ENCODE measurements at regions of chr6 and their contacts with region 1.

Region 1: GRCh38 chr6:34154668-34155447 is 9.0 kb upstream of the GRM4 start:
- DNase-seq: peak; percentile 74
- H3K4me3 ChIP-seq: peak overlapping the region; percentile 31
- H3K27ac ChIP-seq: no peak overlapping the region
- H3K4me1 ChIP-seq: peaks cover 10% of the 10 kb centered on the region
- CTCF ChIP-seq: peak; percentile 93

Region 2: DNA sequence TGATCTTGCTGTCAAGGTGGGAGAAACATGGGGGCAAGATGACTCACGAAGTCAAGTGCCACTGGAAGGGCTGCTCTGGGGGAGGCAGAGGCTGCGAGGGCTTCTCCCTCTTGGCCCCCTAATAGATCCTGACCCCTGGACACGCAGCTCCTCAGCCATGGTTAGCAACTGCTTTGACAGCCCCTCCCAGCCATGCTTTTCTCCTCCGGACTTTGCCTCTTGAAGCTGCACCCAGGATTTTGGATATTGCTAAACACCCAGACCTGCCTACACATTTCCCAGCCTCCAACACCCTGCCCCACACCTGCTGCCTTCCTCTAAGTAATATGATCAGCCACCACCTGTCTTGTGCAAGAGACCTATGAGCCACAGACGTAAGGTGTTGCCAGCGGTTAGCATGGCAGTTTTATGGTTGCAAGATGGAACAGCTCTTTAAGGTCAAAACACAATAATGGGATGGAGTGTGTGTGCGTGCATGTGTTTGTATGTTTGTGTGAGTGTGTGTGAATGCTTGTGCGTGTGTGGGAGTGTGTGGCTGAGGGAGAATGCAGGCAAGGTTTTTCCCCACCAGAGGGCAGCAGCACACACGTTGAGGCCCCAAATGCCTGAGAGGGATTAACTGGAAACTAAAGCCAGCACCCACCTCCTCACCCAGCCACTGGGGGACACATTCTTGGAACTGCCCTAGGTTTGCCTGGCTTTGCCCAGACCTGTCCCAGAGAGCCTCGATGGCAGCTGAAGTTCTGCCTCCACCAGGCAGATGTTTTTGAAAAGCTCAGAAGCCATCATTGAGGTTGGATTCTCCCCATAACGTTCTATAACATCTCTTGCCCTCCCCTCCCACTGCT is 410.6 kb before region 1 on chr6:
- CTCF ChIA-PET with region 1: no interaction called
- POLR2A ChIA-PET with region 1: no interaction called
- intact Hi-C with region 1: loop called (anchors 10 kb)
- DNase-seq: peak; percentile 79
- H3K4me3 ChIP-seq: no peak overlapping the region
- H3K27ac ChIP-seq: no peak overlapping the region
- H3K4me1 ChIP-seq: no peaks in the 10 kb centered on the region
- CTCF ChIP-seq: peak; percentile 94

Region 3: GRCh38 chr6:33771146-33772081 is 383.4 kb before region 1 on chr6:
- CTCF ChIA-PET with region 1: no interaction called
- POLR2A ChIA-PET with region 1: no interaction called
- intact Hi-C with region 1: loop called (anchors 1 kb)
- DNase-seq: peak; percentile 70
- H3K4me3 ChIP-seq: no peak overlapping the region
- H3K27ac ChIP-seq: no peak overlapping the region
- H3K4me1 ChIP-seq: peaks cover 3% of the 10 kb centered on the region
- CTCF ChIP-seq: peak; percentile 91

Region 4: DNA sequence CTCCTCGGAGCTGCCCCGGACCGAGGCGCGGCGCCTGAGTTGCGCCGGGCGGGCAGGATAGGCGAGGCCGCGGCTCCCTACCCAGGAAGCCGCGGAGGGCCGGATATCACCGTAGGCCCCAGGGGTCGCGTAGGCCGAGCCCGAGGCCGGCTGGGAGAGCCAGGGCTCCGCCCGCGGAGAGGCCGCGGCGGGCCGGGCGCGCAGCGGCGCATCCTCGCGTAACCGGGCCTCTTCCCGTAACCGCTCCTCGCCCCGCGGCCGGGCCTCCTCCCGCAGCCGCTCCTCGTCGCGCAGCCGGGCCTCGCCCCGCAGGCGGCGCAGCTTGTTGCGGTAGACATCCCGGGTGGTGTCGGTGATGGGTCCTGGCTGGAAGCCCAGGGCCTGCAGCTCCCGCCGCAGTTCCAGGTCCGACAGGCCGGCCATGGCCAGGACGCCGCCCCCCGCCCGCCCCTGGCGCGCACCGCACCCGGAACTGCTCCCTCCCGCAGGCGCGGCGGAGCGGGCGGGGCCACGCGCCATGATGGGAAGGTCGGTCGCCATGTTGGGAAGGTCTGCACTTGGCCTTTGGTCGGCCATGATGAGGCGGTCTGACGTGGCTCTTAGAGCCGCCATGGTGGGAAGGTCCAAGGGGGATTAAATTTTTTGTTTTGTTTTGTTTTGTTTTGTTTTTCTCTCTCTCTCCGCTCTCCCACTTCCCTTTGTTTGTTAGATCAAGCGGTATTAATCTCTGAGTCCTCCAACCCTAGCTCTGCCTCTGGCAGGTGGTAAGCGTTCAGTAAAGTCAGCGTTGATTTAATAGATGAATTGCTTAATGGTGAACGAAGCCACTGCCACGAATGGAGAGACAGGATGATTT is 365.9 kb before region 1 on chr6 and contains the start of gene LEMD2:
- CTCF ChIA-PET with region 1: no interaction called
- POLR2A ChIA-PET with region 1: no interaction called
- intact Hi-C with region 1: loop called (anchors 5 kb)
- DNase-seq: peak; percentile 90
- H3K4me3 ChIP-seq: peak within 1 kb of the TSS; percentile 93
- H3K27ac ChIP-seq: peak within 1 kb of the TSS; percentile 60
- H3K4me1 ChIP-seq: peaks cover 23% of the 10 kb centered on the region
- CTCF ChIP-seq: no peak
- total RNA-seq, gene LEMD2: 59.2 and 62.2 TPM in 2 replicates

Region 5: GRCh38 chr6:33958526-33959333 is 196.1 kb before region 1 on chr6:
- CTCF ChIA-PET with region 1: no interaction called
- POLR2A ChIA-PET with region 1: no interaction called
- intact Hi-C with region 1: loop called (anchors 10 kb)
- DNase-seq: peak; percentile 45
- H3K4me3 ChIP-seq: no peak overlapping the region
- H3K27ac ChIP-seq: no peak overlapping the region
- H3K4me1 ChIP-seq: no peaks in the 10 kb centered on the region
- CTCF ChIP-seq: peak; percentile 76

Region 6: DNA sequence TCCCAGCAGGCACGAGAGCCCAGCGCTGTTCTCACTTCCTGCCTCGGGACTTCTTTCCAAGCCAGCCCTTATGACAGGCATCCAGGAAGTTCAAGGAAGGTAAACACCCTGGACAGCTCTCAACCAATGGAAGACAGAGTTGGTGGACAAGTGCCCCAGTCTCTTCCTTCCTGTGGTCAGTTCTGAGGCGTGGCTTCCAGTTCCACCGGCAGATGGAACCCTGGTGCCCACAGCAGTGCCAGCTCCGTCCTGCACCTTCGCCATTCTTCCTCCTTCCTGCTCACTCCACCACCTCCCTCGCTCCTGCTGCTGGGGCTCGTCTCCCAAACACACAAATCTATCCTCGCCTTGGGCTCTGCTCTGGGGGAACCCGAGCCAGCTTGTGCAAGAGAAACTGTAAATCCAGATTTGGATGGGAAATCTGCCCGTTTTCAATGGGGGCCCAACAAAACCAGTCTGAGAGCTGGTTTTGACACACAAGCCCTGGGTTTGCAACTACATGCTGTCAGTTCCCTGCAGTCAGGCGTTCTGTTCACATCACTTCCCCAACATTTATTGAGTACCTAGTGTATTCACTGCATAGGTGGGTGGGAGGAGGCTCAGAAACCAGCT is 171.6 kb before region 1 on chr6:
- CTCF ChIA-PET with region 1: no interaction called
- POLR2A ChIA-PET with region 1: no interaction called
- intact Hi-C with region 1: no loop called
- DNase-seq: no peak
- H3K4me3 ChIP-seq: no peak overlapping the region
- H3K27ac ChIP-seq: no peak overlapping the region
- H3K4me1 ChIP-seq: no peaks in the 10 kb centered on the region
- CTCF ChIP-seq: no peak

Region 7: GRCh38 chr6:34055223-34055933 is 99.5 kb before region 1 on chr6:
- CTCF ChIA-PET with region 1: interaction called, 3 read pairs
- POLR2A ChIA-PET with region 1: no interaction called
- intact Hi-C with region 1: loop called (anchors 1 kb)
- DNase-seq: peak; percentile 83
- H3K4me3 ChIP-seq: no peak overlapping the region
- H3K27ac ChIP-seq: no peak overlapping the region
- H3K4me1 ChIP-seq: peaks cover 30% of the 10 kb centered on the region
- CTCF ChIP-seq: peak; percentile 94

Region 8: DNA sequence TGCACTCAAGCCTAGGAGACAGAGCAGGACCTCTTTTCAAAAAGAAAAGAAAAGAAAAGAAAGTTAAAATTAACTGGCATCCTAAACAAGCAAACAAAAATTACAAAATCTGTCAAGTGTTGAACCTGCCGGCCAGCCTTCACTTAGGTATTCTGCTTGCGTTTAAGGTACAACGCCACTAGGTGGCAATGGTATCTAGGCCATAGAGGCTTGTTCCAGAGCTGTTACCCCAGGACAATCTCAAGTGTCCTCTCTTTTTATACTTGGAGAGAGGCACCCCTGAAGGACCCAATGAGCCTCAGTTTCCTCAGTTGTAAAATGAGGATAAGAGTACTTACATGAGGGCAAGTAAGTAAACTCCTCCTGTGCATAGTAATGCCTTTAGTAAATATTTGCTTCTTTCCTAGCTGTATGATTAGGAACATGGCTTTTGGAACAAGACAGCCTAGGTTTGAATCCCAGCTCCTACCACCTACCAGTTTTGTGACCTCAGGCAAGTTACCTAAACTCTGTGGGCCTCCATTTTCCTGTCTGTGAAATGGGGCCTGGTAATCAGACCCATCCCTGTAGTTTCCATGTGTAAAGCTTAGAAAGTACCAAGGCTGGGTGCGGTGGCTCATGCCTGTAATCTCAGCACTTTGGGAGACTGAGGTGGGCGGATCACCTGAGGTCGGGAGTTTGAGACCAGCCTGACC is 305.2 kb after region 1 on chr6:
- CTCF ChIA-PET with region 1: no interaction called
- POLR2A ChIA-PET with region 1: no interaction called
- intact Hi-C with region 1: no loop called
- DNase-seq: peak; percentile 81
- H3K4me3 ChIP-seq: no peak overlapping the region
- H3K27ac ChIP-seq: no peak overlapping the region
- H3K4me1 ChIP-seq: peaks cover 30% of the 10 kb centered on the region
- CTCF ChIP-seq: peak; percentile 96

Measured in OCI-LY7 (cell line).